ENCODE measurements at regions of chr11 and their contacts with region 1.

Region 1: GRCh38 chr11:61509043-61510029 is 787 bp downstream of the LRRC10B start:
- DNase-seq: peak; percentile 81 to 84
- H3K4me3 ChIP-seq: peak overlapping the region in 3 of 4 experiments; percentile 33 to 54 (median 34); a peak in 6 of 8 replicates
- H3K27ac ChIP-seq: no peak overlapping the region
- H3K4me1 ChIP-seq: peaks cover 4 to 43% (median 34%) of the 10 kb centered on the region in 4 experiments
- H3K27me3 ChIP-seq: peaks cover 13 to 43% (median 40%) of the 10 kb centered on the region in 4 experiments
- CTCF ChIP-seq: peak in 2 of 3 experiments; percentile 69 to 81; a peak in 3 of 4 replicates
- EP300 ChIP-seq: no peak
- POLR2A ChIP-seq: no peak
- RAD21 ChIP-seq: peak; percentile 29 to 58; a peak in 3 of 4 replicates

Region 2: GRCh38 chr11:61488651-61489291 is 20.6 kb before region 1 on chr11:
- CTCF ChIA-PET with region 1: interaction called, 2,106 read pairs
- POLR2A ChIA-PET with region 1: interaction called, 24 read pairs
- DNase-seq: peak in 1 of 2 experiments; percentile 66
- H3K4me3 ChIP-seq: no peak overlapping the region
- H3K27ac ChIP-seq: no peak overlapping the region
- H3K4me1 ChIP-seq: peaks cover 0 to 23% (median 17%) of the 10 kb centered on the region in 4 experiments; a peak in 6 of 7 replicates
- H3K27me3 ChIP-seq: 0 out of 7 replicates have a peak, but pooled peaks cover 0 to 2% (median 0%) of the 10 kb centered on the region in 4 experiments
- CTCF ChIP-seq: no peak
- EP300 ChIP-seq: no peak
- POLR2A ChIP-seq: no peak
- RAD21 ChIP-seq: no peak

Region 3: DNA sequence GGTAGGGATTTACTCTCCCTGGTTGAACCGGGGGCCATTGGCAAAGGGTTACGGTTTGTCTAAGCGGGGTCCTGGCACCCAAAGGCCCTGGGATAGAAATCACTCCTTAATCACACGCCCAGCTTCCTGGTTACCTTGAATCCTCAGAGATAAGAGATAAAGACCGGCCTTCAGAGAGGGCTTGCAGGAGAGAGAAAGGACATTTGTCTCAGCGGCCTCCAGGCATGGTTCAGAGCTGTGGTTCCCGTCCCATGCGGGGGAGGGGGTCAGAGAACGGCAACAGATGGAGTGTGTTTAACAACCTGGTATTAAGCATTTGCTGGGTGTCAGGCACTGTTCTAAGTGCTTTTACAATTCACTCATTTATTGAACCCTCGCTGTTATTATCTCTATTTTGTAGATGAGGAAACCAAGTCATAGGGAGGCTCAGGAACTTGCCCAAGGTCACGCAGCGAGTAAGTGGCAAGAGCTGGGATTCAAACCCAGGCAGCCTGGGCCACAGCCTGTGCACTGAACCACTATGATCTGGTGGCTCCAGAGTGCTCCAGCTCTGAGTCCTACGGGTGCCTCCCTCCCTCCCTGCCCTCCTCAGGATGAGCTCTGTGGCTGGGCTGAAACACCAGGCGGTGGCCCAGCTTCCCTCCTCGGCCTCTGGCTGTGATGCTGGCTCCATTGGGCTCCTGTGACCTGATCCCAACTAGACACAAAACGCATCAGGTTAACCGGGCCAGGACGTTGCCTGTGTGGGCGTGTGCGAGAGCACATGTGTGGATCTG is 17.8 kb after region 1 on chr11:
- CTCF ChIA-PET with region 1: interaction called, 27 read pairs
- POLR2A ChIA-PET with region 1: interaction called, 5 read pairs
- DNase-seq: no peak
- H3K4me3 ChIP-seq: no peak overlapping the region
- H3K27ac ChIP-seq: no peak overlapping the region
- H3K4me1 ChIP-seq: peaks cover 0 to 11% (median 4%) of the 10 kb centered on the region in 4 experiments; a peak in 5 of 7 replicates
- H3K27me3 ChIP-seq: no peaks in the 10 kb centered on the region; a peak in 1 of 7 replicates
- CTCF ChIP-seq: no peak
- EP300 ChIP-seq: no peak
- POLR2A ChIP-seq: no peak
- RAD21 ChIP-seq: no peak

Region 4: GRCh38 chr11:61555051-61555969 is 46.0 kb after region 1 on chr11:
- CTCF ChIA-PET with region 1: interaction called, 109 read pairs
- POLR2A ChIA-PET with region 1: no interaction called
- DNase-seq: peak in 1 of 2 experiments; percentile 72
- H3K4me3 ChIP-seq: peak overlapping the region; percentile 11 to 62 (median 34); a peak in 7 of 8 replicates
- H3K27ac ChIP-seq: no peak overlapping the region
- H3K4me1 ChIP-seq: peaks cover 0 to 27% (median 14%) of the 10 kb centered on the region in 4 experiments; a peak in 4 of 7 replicates
- H3K27me3 ChIP-seq: peaks cover 0 to 21% (median 20%) of the 10 kb centered on the region in 4 experiments; a peak in 6 of 7 replicates
- CTCF ChIP-seq: peak; percentile 32 to 45 (median 38); a peak in 3 of 4 replicates
- EP300 ChIP-seq: no peak
- POLR2A ChIP-seq: no peak
- RAD21 ChIP-seq: peak in 1 of 2 experiments; percentile 16; a peak in 1 of 4 replicates

Measured in H1 (cell line).